CD8-positive, alpha-beta T cell (primary cell): ENCODE measurements at regions of chr1 and their contacts with region 1.

Region 1: GRCh38 chr1:67162957-67163356 is 3.3 kb upstream of the IL23R start:
- DNase-seq: peak in 3 of 9 experiments; percentile 13 to 27 (median 22)
- ATAC-seq: peak; percentile 60
- H3K4me3 ChIP-seq: no peak overlapping the region
- H3K4me3 Mint-ChIP-seq: no peak overlapping the region
- H3K27ac ChIP-seq: no peak overlapping the region
- H3K27ac Mint-ChIP-seq: no peak overlapping the region
- H3K4me1 ChIP-seq: no peaks in the 10 kb centered on the region
- H3K4me1 Mint-ChIP-seq: peaks cover 7% of the 10 kb centered on the region
- H3K27me3 ChIP-seq: no peaks in the 10 kb centered on the region
- H3K27me3 Mint-ChIP-seq: peaks cover 3% of the 10 kb centered on the region
- CTCF ChIP-seq: no peak

Region 2: DNA sequence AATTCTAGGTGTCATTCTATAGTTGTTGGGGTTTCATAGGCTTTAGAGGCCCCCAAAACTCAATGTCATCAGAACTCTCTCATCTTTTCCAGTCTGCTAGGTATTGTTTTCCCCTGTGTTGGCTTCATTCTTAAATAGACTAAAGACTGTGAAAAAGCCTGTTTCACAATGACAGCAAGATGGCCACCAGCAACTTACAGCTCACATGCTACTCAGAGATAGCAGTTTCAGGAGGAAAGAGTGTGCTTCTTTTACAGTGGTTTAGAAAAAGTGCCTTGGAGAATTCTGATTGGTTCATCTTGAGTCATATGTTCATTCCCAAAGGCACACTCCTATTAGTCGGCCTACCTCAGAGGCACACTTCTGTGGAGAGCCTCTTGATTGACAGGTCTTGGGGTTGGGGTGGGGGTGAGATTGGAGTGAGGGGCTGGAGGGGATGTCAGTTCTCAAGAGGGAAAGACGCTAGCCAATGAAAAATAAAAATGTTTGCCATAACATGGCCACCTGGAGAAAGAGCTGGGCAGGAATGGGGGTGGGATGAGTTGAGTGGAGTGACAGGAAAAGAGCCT is 11.8 kb after region 1 on chr1:
- CTCF ChIA-PET with region 1: no interaction called
- POLR2A ChIA-PET with region 1: interaction called, 3 read pairs
- intact Hi-C with region 1: loop called in 1 of 2 experiments (anchors 1 kb)
- DNase-seq: no peak
- ATAC-seq: no peak
- H3K4me3 ChIP-seq: no peak overlapping the region
- H3K4me3 Mint-ChIP-seq: no peak overlapping the region
- H3K27ac ChIP-seq: no peak overlapping the region
- H3K27ac Mint-ChIP-seq: no peak overlapping the region
- H3K4me1 ChIP-seq: peaks cover 35% of the 10 kb centered on the region
- H3K4me1 Mint-ChIP-seq: peaks cover 42% of the 10 kb centered on the region
- H3K27me3 ChIP-seq: no peaks in the 10 kb centered on the region
- H3K27me3 Mint-ChIP-seq: no peaks in the 10 kb centered on the region
- CTCF ChIP-seq: no peak

Region 3: GRCh38 chr1:67430352-67431155 is 267.6 kb after region 1 on chr1 and contains the start of gene SERBP1:
- CTCF ChIA-PET with region 1: no interaction called
- POLR2A ChIA-PET with region 1: no interaction called
- intact Hi-C with region 1: no loop called
- DNase-seq: peak; percentile 89 to 99 (median 95)
- ATAC-seq: peak; percentile 84
- H3K4me3 ChIP-seq: peak within 1 kb of the TSS; percentile 86 to 94
- H3K4me3 Mint-ChIP-seq: peak within 1 kb of the TSS; percentile 92
- H3K27ac ChIP-seq: peak within 1 kb of the TSS; percentile 86 to 98
- H3K27ac Mint-ChIP-seq: peak within 1 kb of the TSS; percentile 95
- H3K4me1 ChIP-seq: peaks cover 31% of the 10 kb centered on the region
- H3K4me1 Mint-ChIP-seq: peaks cover 54% of the 10 kb centered on the region
- H3K27me3 ChIP-seq: no peaks in the 10 kb centered on the region
- H3K27me3 Mint-ChIP-seq: no peaks in the 10 kb centered on the region
- CTCF ChIP-seq: no peak
- total RNA-seq, gene SERBP1: 136 to 143 TPM